K562 (cell line): ENCODE measurements at regions of chr4 and their contacts with region 1.

Region 1: GRCh38 chr4:5389756-5390310 is 318.5 kb downstream of the EVC2 start:
- DNase-seq: peak in 3 of 4 experiments; percentile 14 to 29 (median 21)
- ATAC-seq: peak; percentile 73
- H3K4me3 ChIP-seq: no peak overlapping the region
- H3K27ac ChIP-seq: no peak overlapping the region
- H3K4me1 ChIP-seq: no peaks in the 10 kb centered on the region
- H3K27me3 ChIP-seq: no peaks in the 10 kb centered on the region; a peak in 1 of 5 replicates
- CTCF ChIP-seq: peak; percentile 33 to 48 (median 48); a peak in 4 of 6 replicates
- EP300 ChIP-seq: no peak
- POLR2A ChIP-seq: no peak
- RAD21 ChIP-seq: peak; percentile 7 to 61; a peak in 2 of 4 replicates

Region 2: DNA sequence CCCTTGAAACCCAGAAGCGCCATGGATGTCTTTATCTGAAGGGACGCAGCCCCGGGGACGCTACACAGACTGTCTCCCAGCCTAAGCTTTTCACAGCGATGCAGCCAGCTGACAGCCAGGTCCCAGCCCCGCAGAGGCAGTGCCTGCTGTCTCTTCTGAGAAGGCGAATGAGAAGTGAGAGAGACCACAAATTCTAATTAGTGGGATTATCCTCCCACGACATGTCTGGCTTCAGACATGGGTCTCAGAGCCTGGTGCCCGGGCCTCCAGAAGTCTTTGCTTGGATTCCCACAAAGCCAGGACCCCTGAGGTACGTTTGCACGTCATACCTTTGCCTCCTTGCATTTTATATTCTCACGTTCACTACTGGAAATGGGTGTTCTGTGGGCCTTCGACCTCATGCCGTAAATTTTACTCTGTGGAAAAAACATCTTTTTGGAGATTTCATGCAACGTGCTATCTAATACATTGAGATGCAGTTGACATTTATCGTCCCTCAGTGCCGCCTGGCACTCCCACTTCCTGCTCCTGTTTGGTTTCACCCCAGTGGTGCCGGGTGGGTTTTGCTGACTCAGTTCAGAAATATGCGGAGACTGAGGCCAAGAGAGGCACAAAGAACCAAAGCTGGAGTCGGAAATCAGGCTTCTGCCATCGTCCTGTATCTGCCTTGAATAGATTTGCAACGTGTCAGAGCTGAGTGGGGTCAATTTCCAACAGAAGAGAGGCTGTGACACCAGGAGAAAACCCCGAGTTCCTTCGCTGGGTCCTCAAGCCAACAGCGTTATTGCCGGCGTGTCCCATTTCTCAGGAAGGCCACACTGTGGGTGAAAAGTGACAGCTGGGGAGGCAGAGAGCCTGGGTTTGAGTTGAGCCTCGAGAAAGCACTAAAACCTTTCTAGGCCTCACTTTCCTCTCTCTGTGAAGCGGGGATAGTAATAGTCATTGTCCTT is 224.1 kb before region 1 on chr4:
- CTCF ChIA-PET with region 1: no interaction called
- POLR2A ChIA-PET with region 1: no interaction called
- in situ Hi-C with region 1: no loop called
- intact Hi-C with region 1: no loop called
- DNase-seq: no peak
- ATAC-seq: no peak
- H3K4me3 ChIP-seq: no peak overlapping the region
- H3K27ac ChIP-seq: no peak overlapping the region
- H3K4me1 ChIP-seq: no peaks in the 10 kb centered on the region
- H3K27me3 ChIP-seq: peaks cover 13 to 60% of the 10 kb centered on the region in 2 experiments; a peak in 4 of 5 replicates
- CTCF ChIP-seq: no peak
- EP300 ChIP-seq: no peak
- POLR2A ChIP-seq: no peak
- RAD21 ChIP-seq: no peak

Region 3: DNA sequence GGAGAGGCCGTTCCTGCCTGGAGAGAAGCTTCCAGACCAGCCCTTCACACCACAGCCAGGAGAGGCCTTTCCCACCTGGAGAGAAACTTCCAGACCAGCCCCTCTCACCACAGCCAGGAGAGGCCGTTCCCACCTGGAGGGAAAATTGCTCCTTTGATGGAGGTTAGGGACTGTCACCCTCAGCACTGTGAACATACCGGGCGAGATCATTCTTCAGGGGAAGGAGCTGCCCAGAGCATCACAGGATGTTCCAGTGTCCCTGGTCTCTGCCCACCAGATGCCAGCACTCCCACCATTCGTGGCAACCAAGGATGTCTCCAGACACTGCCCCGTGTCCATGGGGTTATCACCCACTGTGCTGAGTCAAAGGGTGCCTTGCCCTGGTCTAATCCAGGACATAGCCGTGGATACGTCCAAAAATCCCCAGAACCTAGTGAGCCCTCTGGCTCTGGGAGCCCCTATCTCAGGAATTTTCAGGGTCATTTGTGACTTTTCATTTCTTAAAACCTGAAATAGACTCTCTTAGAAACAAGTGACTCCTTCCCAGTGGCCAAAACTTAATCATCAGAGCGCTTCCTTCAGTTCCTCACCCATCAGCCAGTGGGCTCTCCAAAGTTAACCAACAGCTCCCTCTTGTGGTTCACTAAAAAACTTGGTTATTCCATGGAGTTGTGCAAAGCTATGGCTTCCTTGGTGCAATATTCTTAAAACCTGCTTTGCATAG is 422.8 kb after region 1 on chr4:
- CTCF ChIA-PET with region 1: no interaction called
- POLR2A ChIA-PET with region 1: no interaction called
- in situ Hi-C with region 1: no loop called
- intact Hi-C with region 1: loop called (anchors 5 kb)
- DNase-seq: peak; percentile 71 to 78 (median 76)
- ATAC-seq: peak; percentile 98
- H3K4me3 ChIP-seq: no peak overlapping the region
- H3K27ac ChIP-seq: no peak overlapping the region
- H3K4me1 ChIP-seq: no peaks in the 10 kb centered on the region; a peak in 1 of 5 replicates
- H3K27me3 ChIP-seq: no peaks in the 10 kb centered on the region; a peak in 1 of 5 replicates
- CTCF ChIP-seq: peak; percentile 66 to 89 (median 84)
- EP300 ChIP-seq: no peak
- POLR2A ChIP-seq: no peak
- RAD21 ChIP-seq: peak; percentile 63 to 71; a peak in 3 of 4 replicates